SK-N-SH (cell line): ENCODE measurements at regions of chr6 and their contacts with region 1.

Region 1: GRCh38 chr6:166381733-166382499 is 824 bp downstream of the MPC1 start:
- DNase-seq: peak; percentile 78
- H3K4me3 ChIP-seq: peak overlapping the region; percentile 91 to 96
- H3K27ac ChIP-seq: peak overlapping the region in 1 of 2 experiments; percentile 58; a peak in 2 of 4 replicates
- H3K4me1 ChIP-seq: peaks cover 0 to 2% of the 10 kb centered on the region in 2 experiments; a peak in 1 of 4 replicates
- H3K27me3 ChIP-seq: no peaks in the 10 kb centered on the region
- CTCF ChIP-seq: peak; percentile 79
- EP300 ChIP-seq: no peak
- RAD21 ChIP-seq: peak; percentile 54

Region 2: GRCh38 chr6:166275714-166276166 is 106.2 kb before region 1 on chr6:
- CTCF ChIA-PET with region 1: interaction called, 27 read pairs
- POLR2A ChIA-PET with region 1: no interaction called
- DNase-seq: peak; percentile 88
- H3K4me3 ChIP-seq: no peak overlapping the region; a peak in 1 of 4 replicates
- H3K27ac ChIP-seq: no peak overlapping the region
- H3K4me1 ChIP-seq: no peaks in the 10 kb centered on the region; a peak in 1 of 4 replicates
- H3K27me3 ChIP-seq: peaks cover 14% of the 10 kb centered on the region; the same call in 1 of the 2 replicates
- CTCF ChIP-seq: peak; percentile 98
- EP300 ChIP-seq: no peak
- RAD21 ChIP-seq: peak; percentile 92

Region 3: DNA sequence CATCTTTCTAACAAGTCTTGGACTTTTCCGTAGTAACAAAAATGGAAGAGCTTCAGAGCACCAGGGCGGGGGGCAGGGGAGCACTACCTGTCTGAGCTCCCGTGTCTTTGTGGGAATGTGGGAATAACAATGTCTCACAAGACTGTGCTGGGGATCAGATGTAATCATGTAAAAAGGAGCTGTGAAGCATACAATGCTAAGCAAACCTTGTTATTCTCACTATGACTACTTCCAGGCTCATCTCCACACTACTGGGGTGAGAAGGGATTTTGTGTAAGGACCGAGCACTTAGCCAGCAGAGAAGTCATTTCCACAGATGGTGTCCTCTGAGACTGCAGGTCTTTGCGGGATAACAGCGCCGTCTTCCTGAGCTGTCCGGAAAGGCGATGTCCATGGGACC is 100.8 kb before region 1 on chr6:
- CTCF ChIA-PET with region 1: interaction called, 27 read pairs
- POLR2A ChIA-PET with region 1: no interaction called
- DNase-seq: no peak
- H3K4me3 ChIP-seq: no peak overlapping the region
- H3K27ac ChIP-seq: no peak overlapping the region
- H3K4me1 ChIP-seq: no peaks in the 10 kb centered on the region; a peak in 1 of 4 replicates
- H3K27me3 ChIP-seq: peaks cover 42% of the 10 kb centered on the region; the same call in 1 of the 2 replicates
- CTCF ChIP-seq: no peak
- EP300 ChIP-seq: no peak
- RAD21 ChIP-seq: no peak

Region 4: GRCh38 chr6:166313255-166314070 is 68.5 kb before region 1 on chr6:
- CTCF ChIA-PET with region 1: interaction called, 26 read pairs
- POLR2A ChIA-PET with region 1: no interaction called
- DNase-seq: peak; percentile 74
- H3K4me3 ChIP-seq: no peak overlapping the region; a peak in 1 of 4 replicates
- H3K27ac ChIP-seq: no peak overlapping the region
- H3K4me1 ChIP-seq: peaks cover 0 to 3% of the 10 kb centered on the region in 2 experiments; a peak in 1 of 4 replicates
- H3K27me3 ChIP-seq: peaks cover 10% of the 10 kb centered on the region
- CTCF ChIP-seq: peak; percentile 56
- EP300 ChIP-seq: no peak
- RAD21 ChIP-seq: peak; percentile 58

Region 5: DNA sequence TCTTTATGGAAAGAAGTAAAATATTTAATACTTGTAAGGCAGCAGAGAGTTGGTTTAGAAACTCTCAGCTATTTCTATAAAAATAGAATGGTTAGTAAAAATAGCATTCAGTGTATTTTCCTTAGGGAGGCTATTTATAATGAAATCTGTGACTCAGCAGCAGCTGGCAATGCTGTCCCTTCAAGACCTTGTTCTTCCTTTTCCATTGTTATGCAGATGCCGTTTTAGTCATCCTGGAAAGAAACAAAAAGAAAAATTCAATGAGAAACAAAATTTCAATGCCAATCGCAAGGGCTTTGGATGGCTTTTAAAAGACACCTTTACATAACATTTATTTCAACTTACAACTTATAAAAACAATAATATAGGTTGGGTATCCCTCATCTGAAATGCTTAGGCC is 16.7 kb before region 1 on chr6:
- CTCF ChIA-PET with region 1: interaction called, 12 read pairs
- POLR2A ChIA-PET with region 1: no interaction called
- DNase-seq: no peak
- H3K4me3 ChIP-seq: no peak overlapping the region
- H3K27ac ChIP-seq: peak overlapping the region in 1 of 2 experiments; percentile 44; a peak in 2 of 4 replicates
- H3K4me1 ChIP-seq: peaks cover 2 to 14% of the 10 kb centered on the region in 2 experiments; a peak in 2 of 4 replicates
- H3K27me3 ChIP-seq: no peaks in the 10 kb centered on the region
- CTCF ChIP-seq: no peak
- EP300 ChIP-seq: no peak
- RAD21 ChIP-seq: no peak

Region 6: GRCh38 chr6:166556871-166557322 is 175.0 kb after region 1 on chr6:
- CTCF ChIA-PET with region 1: no interaction called
- POLR2A ChIA-PET with region 1: no interaction called
- DNase-seq: no peak
- H3K4me3 ChIP-seq: no peak overlapping the region; a peak in 1 of 4 replicates
- H3K27ac ChIP-seq: peak overlapping the region; percentile 67 to 91
- H3K4me1 ChIP-seq: peaks cover 16 to 17% of the 10 kb centered on the region in 2 experiments; a peak in 2 of 4 replicates
- H3K27me3 ChIP-seq: no peaks in the 10 kb centered on the region
- CTCF ChIP-seq: no peak
- EP300 ChIP-seq: peak in 1 of 2 experiments; percentile 94; a peak in 2 of 4 replicates
- RAD21 ChIP-seq: no peak; the same call in 1 of the 2 replicates